ENCODE measurements at regions of chr15 and their contacts with region 1.

Region 1: GRCh38 chr15:84600851-84601838 is at the start of gene ZSCAN2:
- DNase-seq: peak; percentile 95 to 99 (median 98)

Region 2: DNA sequence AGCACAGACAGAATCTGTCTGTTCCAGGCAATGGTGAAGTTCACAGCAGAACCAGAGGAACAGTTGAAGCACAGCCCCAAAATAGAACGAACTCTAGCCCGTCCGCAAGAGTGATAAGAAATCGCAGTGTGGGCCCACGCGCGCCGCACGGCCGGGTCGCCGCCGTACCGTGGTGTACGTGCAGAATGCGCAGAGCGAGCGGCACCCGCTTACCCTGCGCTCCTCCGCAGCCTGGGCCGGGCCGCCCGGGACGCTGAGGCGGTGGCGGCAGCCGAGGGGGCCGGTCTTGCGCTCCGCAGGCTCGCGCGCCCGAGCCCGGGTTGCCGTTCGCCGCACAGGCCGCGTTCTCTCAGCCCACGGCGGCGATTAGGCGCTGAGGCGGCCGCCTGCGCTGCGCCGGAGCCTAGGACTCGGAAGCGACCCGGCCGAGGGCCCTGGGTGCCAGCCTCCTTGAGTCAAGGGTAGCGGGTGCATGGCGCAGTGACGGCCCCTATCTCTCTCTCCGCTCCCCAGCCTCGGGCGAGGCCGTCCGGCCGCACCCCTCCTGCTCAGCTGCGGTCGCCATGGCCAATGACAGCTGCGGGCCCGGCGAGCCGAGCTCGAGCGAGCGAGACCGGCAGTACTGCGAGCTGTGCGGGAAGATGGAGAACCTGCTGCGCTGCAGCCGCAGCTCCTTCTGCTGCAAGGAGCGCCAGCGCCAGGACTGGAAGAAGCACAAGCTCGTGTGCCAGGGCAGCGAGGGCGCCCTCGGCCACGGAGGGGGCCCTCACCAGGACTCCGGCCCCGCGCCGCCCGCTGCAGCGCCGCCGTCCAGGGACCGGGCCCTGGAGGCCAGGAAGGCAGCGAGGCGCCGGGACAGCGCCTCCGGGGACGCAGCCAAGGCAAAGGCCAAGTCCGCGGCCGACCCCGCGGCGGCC is 32.4 kb after region 1 on chr15:
- intact Hi-C with region 1: loop called (anchors 2 kb)
- DNase-seq: peak; percentile 24 to 87 (median 70)

Region 3: GRCh38 chr15:84929744-84930371 is 328.7 kb after region 1 on chr15:
- intact Hi-C with region 1: loop called (anchors 10 kb)
- DNase-seq: no peak

Measured in head of caudate nucleus (tissue), 42 donors.